Esophagus squamous epithelium (tissue), 5 donors: ENCODE measurements at regions of chr17 and their contacts with region 1.

Region 1: DNA sequence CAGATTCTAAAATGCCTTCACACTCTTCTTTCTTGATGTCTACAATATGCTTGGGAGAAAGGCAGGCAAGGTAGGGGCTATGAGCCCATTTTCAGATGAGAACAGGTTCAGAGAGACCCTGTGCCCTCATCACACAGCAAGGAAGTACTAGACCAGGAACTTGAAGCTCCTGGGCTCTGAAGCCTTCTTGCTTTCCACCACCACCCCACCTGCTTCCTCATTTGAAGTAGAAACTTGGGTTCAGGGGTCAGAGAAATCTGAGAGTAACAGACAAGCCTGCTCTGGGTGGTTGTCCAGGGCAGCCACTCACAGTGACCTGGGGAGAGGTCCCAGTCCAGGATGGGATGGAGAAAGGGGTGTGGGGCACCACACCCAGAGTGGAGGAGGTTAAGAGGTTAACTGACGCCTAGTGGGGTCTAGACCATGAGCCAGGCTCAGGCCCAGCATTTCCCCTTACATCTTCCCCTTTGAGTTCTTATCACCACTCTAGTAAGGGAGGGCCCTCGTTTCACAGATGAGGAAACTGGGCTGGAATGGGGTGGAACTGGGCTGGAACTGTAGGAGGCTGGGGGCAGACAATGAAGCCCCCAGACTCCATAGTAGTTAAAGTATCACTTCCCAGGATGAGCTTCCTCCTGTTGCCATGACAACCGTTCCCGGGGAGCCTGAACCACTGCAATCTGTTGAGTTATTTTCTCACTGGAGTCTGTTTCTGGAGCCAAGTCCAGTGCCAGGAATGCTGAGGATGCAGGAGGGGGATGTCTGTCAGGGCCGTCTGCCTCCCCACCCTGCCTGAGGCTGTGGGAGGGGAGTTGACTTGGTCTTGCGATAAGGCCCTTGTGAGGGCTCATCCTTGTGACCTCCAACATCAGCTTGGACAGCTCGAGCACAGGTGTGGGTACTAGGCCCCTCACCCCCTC is 16.2 kb upstream of the PHF12 start:
- DNase-seq: no peak
- H3K4me3 ChIP-seq: no peak overlapping the region
- H3K27ac ChIP-seq: no peak overlapping the region
- H3K4me1 ChIP-seq: peaks cover 0 to 31% (median 0%) of the 10 kb centered on the region in 3 donors
- H3K27me3 ChIP-seq: peaks cover 0 to 22% (median 0%) of the 10 kb centered on the region in 4 donors
- CTCF ChIP-seq: no peak
- POLR2A ChIP-seq: no peak

Region 2: GRCh38 chr17:29019475-29020181 is 52.1 kb after region 1 on chr17:
- intact Hi-C with region 1: no loop called
- DNase-seq: no peak
- H3K4me3 ChIP-seq: peak overlapping the region in 1 of 4 donors; percentile 48
- H3K27ac ChIP-seq: no peak overlapping the region
- H3K4me1 ChIP-seq: peaks cover 5 to 15% (median 7%) of the 10 kb centered on the region in 3 donors
- H3K27me3 ChIP-seq: peaks cover 0 to 88% (median 2%) of the 10 kb centered on the region in 4 donors
- CTCF ChIP-seq: no peak
- POLR2A ChIP-seq: no peak

Region 3: DNA sequence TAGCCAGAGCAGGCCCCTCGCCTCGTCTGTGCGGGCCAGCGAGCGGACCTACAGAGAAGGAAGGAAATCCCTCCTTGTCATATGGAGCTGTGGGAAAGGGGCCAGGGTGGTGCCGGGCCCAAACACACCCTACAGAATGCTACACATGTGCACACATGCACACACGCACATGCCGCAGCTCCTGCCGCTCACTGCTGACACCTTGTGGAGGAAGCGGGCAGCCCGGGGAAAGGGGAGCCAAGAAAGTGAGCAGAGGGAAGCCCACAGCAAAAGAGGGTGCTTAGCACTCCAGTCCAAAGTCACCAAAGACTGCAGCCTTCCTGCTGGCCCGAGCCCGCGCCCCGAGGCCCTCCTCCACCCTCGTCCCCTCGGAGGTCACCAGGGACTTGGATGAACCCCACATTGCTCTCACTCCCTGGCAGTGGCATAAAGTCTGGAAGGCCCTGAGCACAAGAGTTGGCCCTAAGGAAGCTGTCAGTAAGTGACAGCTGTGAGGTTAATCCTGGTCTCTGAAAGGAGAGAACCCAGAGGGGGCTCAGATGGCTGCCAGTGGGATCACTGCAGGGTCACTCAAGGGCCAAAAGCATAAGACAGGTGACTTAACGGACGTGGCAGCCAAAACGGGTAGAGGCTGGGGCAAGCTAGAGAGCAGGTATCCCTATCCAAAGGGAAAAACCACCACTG is 144.5 kb after region 1 on chr17:
- intact Hi-C with region 1: loop called (anchors 5 kb)
- DNase-seq: no peak
- H3K4me3 ChIP-seq: no peak overlapping the region
- H3K27ac ChIP-seq: peak overlapping the region in 2 of 4 donors; percentile 1 to 2
- H3K4me1 ChIP-seq: peaks cover 2 to 22% (median 10%) of the 10 kb centered on the region in 3 donors
- H3K27me3 ChIP-seq: no peaks in the 10 kb centered on the region
- CTCF ChIP-seq: peak; percentile 68 to 94 (median 88)
- POLR2A ChIP-seq: no peak